HCT116 (cell line): ENCODE measurements at regions of chr11 and their contacts with region 1.

Region 1: GRCh38 chr11:108037636-108038035 is 28.9 kb downstream of the CUL5 start:
- DNase-seq: no peak
- ATAC-seq: no peak
- H3K4me3 ChIP-seq: no peak overlapping the region
- H3K27ac ChIP-seq: no peak overlapping the region
- H3K4me1 ChIP-seq: no peaks in the 10 kb centered on the region
- H3K27me3 ChIP-seq: no peaks in the 10 kb centered on the region
- CTCF ChIP-seq: no peak
- POLR2A ChIP-seq: no peak
- RAD21 ChIP-seq: no peak

Region 2: DNA sequence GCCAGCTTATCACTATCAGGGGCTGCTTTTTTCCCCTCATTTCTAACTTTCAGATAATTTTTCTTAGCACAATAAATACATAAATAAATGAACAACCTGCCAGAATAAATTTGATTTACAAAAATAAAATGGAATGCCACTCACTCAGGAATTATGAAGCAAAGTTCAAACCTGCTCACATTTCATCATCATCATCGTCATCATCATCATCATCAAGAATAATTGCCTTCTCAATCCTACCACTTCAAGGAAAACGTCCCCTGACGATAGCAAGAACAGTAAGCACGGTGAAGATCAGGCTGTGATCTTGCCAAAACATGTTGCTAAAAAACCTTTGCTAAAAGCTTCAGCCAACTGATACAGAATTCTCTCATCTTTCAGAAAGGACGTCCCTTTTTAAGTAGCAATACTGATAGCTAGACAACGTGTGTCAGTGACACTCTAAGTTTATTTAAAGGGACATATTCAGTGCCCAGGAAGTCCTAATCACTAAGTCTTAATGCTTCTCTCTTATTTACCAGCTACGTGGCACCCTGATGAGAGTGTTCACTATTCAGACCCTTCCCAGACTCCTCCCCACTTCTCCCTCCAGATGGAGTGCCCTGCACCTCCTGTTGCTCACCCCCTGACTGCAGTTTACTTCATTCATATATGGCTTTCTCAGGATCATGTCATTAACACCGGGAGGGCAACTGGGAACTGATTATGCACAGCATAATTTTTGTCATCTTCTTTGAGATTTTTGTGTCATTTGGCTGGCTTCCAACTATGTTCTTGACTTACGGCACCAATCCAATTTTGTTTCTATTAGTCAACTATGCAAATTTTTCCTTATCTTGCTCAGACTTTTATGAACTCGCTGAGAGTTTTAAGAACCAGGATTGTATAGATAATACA is 819.3 kb before region 1 on chr11:
- CTCF ChIA-PET with region 1: no interaction called
- POLR2A ChIA-PET with region 1: no interaction called
- RAD21 ChIA-PET with region 1: no interaction called
- intact Hi-C with region 1: no loop called
- DNase-seq: no peak
- ATAC-seq: no peak
- H3K4me3 ChIP-seq: no peak overlapping the region
- H3K27ac ChIP-seq: no peak overlapping the region
- H3K4me1 ChIP-seq: no peaks in the 10 kb centered on the region
- H3K27me3 ChIP-seq: no peaks in the 10 kb centered on the region
- CTCF ChIP-seq: no peak
- POLR2A ChIP-seq: no peak
- RAD21 ChIP-seq: no peak

Region 3: GRCh38 chr11:108069947-108070346 is 32.3 kb after region 1 on chr11:
- CTCF ChIA-PET with region 1: no interaction called
- POLR2A ChIA-PET with region 1: no interaction called
- RAD21 ChIA-PET with region 1: no interaction called
- intact Hi-C with region 1: no loop called
- DNase-seq: no peak
- ATAC-seq: no peak
- H3K4me3 ChIP-seq: no peak overlapping the region
- H3K27ac ChIP-seq: no peak overlapping the region
- H3K4me1 ChIP-seq: no peaks in the 10 kb centered on the region
- H3K27me3 ChIP-seq: no peaks in the 10 kb centered on the region
- CTCF ChIP-seq: no peak
- POLR2A ChIP-seq: no peak
- RAD21 ChIP-seq: no peak

Region 4: GRCh38 chr11:108084811-108085210 is 47.2 kb after region 1 on chr11:
- CTCF ChIA-PET with region 1: no interaction called
- POLR2A ChIA-PET with region 1: no interaction called
- RAD21 ChIA-PET with region 1: no interaction called
- intact Hi-C with region 1: loop called (anchors 5 kb)
- DNase-seq: no peak
- ATAC-seq: no peak
- H3K4me3 ChIP-seq: no peak overlapping the region
- H3K27ac ChIP-seq: no peak overlapping the region
- H3K4me1 ChIP-seq: no peaks in the 10 kb centered on the region
- H3K27me3 ChIP-seq: no peaks in the 10 kb centered on the region
- CTCF ChIP-seq: no peak
- POLR2A ChIP-seq: no peak
- RAD21 ChIP-seq: no peak

Region 5: DNA sequence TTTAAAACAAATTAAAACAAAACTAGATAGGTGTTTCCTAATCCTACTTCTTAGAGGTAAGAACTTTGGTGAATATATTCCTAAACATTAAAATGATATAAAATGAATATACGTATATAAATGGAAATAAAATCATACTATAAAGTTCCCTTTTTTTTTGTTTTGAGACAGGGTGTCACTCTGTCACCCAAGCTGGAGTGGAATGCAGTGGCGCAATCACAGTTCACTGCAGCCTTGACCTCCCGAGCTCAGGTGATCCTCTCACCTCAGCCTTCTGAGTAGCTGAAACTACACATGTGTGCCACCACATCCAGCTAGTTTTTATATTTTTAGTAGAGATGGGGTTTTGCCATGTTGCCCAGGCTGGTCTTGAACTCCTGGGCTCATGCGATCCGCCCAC is 139.9 kb after region 1 on chr11:
- CTCF ChIA-PET with region 1: no interaction called
- POLR2A ChIA-PET with region 1: no interaction called
- RAD21 ChIA-PET with region 1: no interaction called
- intact Hi-C with region 1: no loop called
- DNase-seq: no peak
- ATAC-seq: no peak
- H3K4me3 ChIP-seq: no peak overlapping the region
- H3K27ac ChIP-seq: no peak overlapping the region
- H3K4me1 ChIP-seq: no peaks in the 10 kb centered on the region
- H3K27me3 ChIP-seq: no peaks in the 10 kb centered on the region
- CTCF ChIP-seq: no peak
- POLR2A ChIP-seq: no peak
- RAD21 ChIP-seq: no peak